ENCODE measurements at regions of chr1 and their contacts with region 1.

Region 1: GRCh38 chr1:155030243-155030795 is 3.3 kb downstream of the DCST2 start:
- DNase-seq: no peak
- ATAC-seq: no peak
- H3K4me3 ChIP-seq: no peak overlapping the region
- H3K27ac ChIP-seq: no peak overlapping the region
- H3K4me1 ChIP-seq: peaks cover 7% of the 10 kb centered on the region
- H3K27me3 ChIP-seq: no peaks in the 10 kb centered on the region
- CTCF ChIP-seq: no peak

Region 2: GRCh38 chr1:154809436-154810413 is 220.6 kb before region 1 on chr1:
- CTCF ChIA-PET with region 1: no interaction called
- POLR2A ChIA-PET with region 1: no interaction called
- intact Hi-C with region 1: no loop called
- DNase-seq: peak; percentile 54
- ATAC-seq: peak; percentile 92
- H3K4me3 ChIP-seq: no peak overlapping the region
- H3K27ac ChIP-seq: no peak overlapping the region
- H3K4me1 ChIP-seq: no peaks in the 10 kb centered on the region
- H3K27me3 ChIP-seq: peaks cover 65% of the 10 kb centered on the region
- CTCF ChIP-seq: no peak

Region 3: GRCh38 chr1:154901591-154901990 is 128.7 kb before region 1 on chr1:
- CTCF ChIA-PET with region 1: no interaction called
- POLR2A ChIA-PET with region 1: interaction called, 11 read pairs
- intact Hi-C with region 1: no loop called
- DNase-seq: no peak
- ATAC-seq: no peak
- H3K4me3 ChIP-seq: no peak overlapping the region
- H3K27ac ChIP-seq: no peak overlapping the region
- H3K4me1 ChIP-seq: no peaks in the 10 kb centered on the region
- H3K27me3 ChIP-seq: no peaks in the 10 kb centered on the region
- CTCF ChIP-seq: no peak

Region 4: GRCh38 chr1:155244368-155245162 is 214.2 kb after region 1 on chr1:
- CTCF ChIA-PET with region 1: no interaction called
- POLR2A ChIA-PET with region 1: no interaction called
- intact Hi-C with region 1: no loop called
- DNase-seq: peak; percentile 99
- ATAC-seq: peak; percentile 91
- H3K4me3 ChIP-seq: peak overlapping the region; percentile 77
- H3K27ac ChIP-seq: peak overlapping the region; percentile 54
- H3K4me1 ChIP-seq: peaks cover 27% of the 10 kb centered on the region
- H3K27me3 ChIP-seq: no peaks in the 10 kb centered on the region
- CTCF ChIP-seq: peak; percentile 23

Measured in PC-3 (cell line).